ENCODE measurements at regions of chr10 and their contacts with region 1.

Region 1: DNA sequence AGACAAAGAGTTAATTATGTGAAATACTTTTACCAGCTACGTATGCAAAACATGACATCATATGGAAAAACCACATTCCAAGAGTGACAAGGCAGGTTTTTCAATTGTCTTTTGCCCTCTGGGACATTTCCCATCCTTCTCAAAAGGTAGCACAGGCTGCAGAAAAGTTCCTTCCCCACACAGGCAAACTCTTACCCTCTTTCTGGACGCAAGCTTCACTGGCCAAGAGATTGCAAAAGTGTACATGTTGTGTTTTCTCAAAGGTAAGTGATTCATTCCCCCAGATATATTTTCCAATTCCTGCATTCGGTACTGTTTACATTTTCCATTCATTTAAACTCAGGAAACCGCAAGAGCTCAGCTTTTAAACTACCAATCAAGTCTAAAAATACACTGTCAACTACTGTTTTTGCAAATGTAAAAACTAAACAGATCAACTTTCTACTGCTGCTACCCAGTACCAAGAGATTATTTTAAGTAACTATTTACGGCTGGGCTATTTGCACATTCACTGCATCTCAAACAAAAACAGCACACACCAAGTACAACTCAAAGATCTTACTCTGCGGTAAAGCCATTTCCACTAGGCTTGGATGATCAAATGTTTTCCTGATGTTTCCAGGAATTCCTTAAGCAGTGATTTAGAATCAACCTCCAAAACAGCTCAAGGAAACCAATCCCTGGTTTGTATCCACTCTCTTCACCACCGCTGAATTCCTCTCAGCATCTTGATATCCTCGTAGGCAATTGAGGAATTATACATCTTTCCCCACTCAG is 233.6 kb upstream of the CCDC6 start:
- DNase-seq: no peak
- ATAC-seq: no peak
- H3K4me3 ChIP-seq: no peak overlapping the region
- H3K4me3 Mint-ChIP-seq: no peak overlapping the region
- H3K27ac ChIP-seq: no peak overlapping the region
- H3K27ac Mint-ChIP-seq: no peak overlapping the region
- H3K4me1 ChIP-seq: no peaks in the 10 kb centered on the region
- H3K4me1 Mint-ChIP-seq: no peaks in the 10 kb centered on the region
- H3K27me3 ChIP-seq: no peaks in the 10 kb centered on the region
- H3K27me3 Mint-ChIP-seq: no peaks in the 10 kb centered on the region
- CTCF ChIP-seq: no peak

Region 2: DNA sequence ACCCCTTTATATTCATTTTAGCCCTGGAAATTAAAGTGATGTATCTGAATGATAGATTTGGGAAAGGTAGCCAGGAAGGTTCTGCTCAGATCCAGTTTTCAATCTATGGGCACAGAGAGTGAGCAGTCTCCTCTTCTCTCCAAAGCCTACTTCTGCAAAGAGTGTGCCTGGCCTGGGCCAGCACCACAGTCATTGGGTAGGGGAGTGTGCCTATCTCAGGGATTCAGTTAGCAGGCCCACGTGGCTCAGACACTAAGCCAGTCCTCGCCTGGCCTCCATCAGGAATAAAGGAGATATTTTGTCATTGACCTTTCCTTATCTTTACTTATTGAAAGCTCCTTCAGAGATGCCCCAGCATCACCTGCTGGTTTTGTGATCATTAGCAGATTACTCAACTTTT is 17.8 kb before region 1 on chr10:
- CTCF ChIA-PET with region 1: no interaction called
- POLR2A ChIA-PET with region 1: no interaction called
- intact Hi-C with region 1: no loop called
- DNase-seq: no peak
- ATAC-seq: no peak
- H3K4me3 ChIP-seq: no peak overlapping the region
- H3K4me3 Mint-ChIP-seq: no peak overlapping the region
- H3K27ac ChIP-seq: no peak overlapping the region
- H3K27ac Mint-ChIP-seq: no peak overlapping the region
- H3K4me1 ChIP-seq: no peaks in the 10 kb centered on the region
- H3K4me1 Mint-ChIP-seq: no peaks in the 10 kb centered on the region
- H3K27me3 ChIP-seq: no peaks in the 10 kb centered on the region
- H3K27me3 Mint-ChIP-seq: no peaks in the 10 kb centered on the region
- CTCF ChIP-seq: no peak

Region 3: GRCh38 chr10:60155943-60156683 is 16.1 kb after region 1 on chr10:
- CTCF ChIA-PET with region 1: no interaction called
- POLR2A ChIA-PET with region 1: no interaction called
- intact Hi-C with region 1: no loop called
- DNase-seq: no peak
- ATAC-seq: no peak
- H3K4me3 ChIP-seq: no peak overlapping the region
- H3K4me3 Mint-ChIP-seq: no peak overlapping the region
- H3K27ac ChIP-seq: no peak overlapping the region
- H3K27ac Mint-ChIP-seq: no peak overlapping the region
- H3K4me1 ChIP-seq: no peaks in the 10 kb centered on the region
- H3K4me1 Mint-ChIP-seq: no peaks in the 10 kb centered on the region
- H3K27me3 ChIP-seq: peaks cover 0 to 2% of the 10 kb centered on the region in 2 experiments
- H3K27me3 Mint-ChIP-seq: peaks cover 3% of the 10 kb centered on the region
- CTCF ChIP-seq: no peak

Region 4: GRCh38 chr10:61643316-61643751 is 1503.4 kb after region 1 on chr10:
- CTCF ChIA-PET with region 1: no interaction called
- POLR2A ChIA-PET with region 1: no interaction called
- intact Hi-C with region 1: loop called in 1 of 2 experiments (anchors 10 kb)
- DNase-seq: no peak
- ATAC-seq: no peak
- H3K4me3 ChIP-seq: no peak overlapping the region
- H3K4me3 Mint-ChIP-seq: no peak overlapping the region
- H3K27ac ChIP-seq: no peak overlapping the region
- H3K27ac Mint-ChIP-seq: no peak overlapping the region
- H3K4me1 ChIP-seq: no peaks in the 10 kb centered on the region
- H3K4me1 Mint-ChIP-seq: no peaks in the 10 kb centered on the region
- H3K27me3 ChIP-seq: no peaks in the 10 kb centered on the region
- H3K27me3 Mint-ChIP-seq: no peaks in the 10 kb centered on the region
- CTCF ChIP-seq: no peak

Measured in CD8-positive, alpha-beta T cell (primary cell).